Activated naive CD4-positive, alpha-beta T cell treated with anti-CD3 and anti-CD28 coated beads, Interleukin-2, amount 10 ng/mL, durations not matched to agents 7 days and 5 days (primary cell): ENCODE measurements at regions of chr3 and their contacts with region 1.

Region 1: GRCh38 chr3:14203521-14204079 is 25.0 kb downstream of the LSM3 start:
- DNase-seq: peak; percentile 61
- H3K4me3 Mint-ChIP-seq: no peak overlapping the region
- H3K27ac Mint-ChIP-seq: no peak overlapping the region
- H3K4me1 Mint-ChIP-seq: no peaks in the 10 kb centered on the region
- H3K27me3 Mint-ChIP-seq: no peaks in the 10 kb centered on the region

Region 2: GRCh38 chr3:14170531-14171173 is 32.9 kb before region 1 on chr3:
- CTCF ChIA-PET with region 1: no interaction called
- DNase-seq: no peak
- H3K4me3 Mint-ChIP-seq: no peak overlapping the region
- H3K27ac Mint-ChIP-seq: no peak overlapping the region
- H3K4me1 Mint-ChIP-seq: peaks cover 21% of the 10 kb centered on the region
- H3K27me3 Mint-ChIP-seq: no peaks in the 10 kb centered on the region

Region 3: DNA sequence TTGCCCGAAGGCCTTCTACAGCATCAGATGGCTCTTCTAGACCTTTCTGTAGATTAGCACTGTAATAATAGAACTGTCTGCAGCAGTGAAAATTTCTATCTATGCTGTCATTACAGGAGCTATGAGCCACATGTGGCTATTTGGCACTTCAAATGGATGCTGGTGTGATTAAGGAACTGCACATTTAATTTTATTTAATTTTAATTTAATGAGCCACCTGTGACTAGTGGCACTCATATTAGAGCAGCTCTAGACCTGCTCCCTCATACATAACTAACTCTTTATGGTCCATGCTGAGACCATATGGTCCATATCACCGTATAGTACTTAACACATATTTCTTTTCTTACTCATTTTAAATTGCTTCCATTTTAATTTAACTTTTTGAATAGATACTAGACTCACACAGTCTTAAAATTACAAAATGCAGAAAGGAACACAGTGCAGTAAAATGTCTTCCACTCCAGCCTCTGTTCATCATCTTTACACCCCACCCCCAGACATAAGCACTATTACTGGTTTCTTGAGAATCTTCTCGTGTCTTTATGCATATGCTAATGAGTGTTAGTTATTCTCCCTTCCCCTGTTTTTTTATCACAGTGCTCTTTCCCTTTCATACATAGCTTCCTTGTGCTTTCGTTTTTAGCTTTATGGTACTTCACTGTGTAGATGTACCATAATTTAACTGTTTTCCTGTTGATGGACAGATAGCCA is 15.4 kb before region 1 on chr3:
- CTCF ChIA-PET with region 1: interaction called, 11 read pairs
- DNase-seq: no peak
- H3K4me3 Mint-ChIP-seq: no peak overlapping the region
- H3K27ac Mint-ChIP-seq: no peak overlapping the region
- H3K4me1 Mint-ChIP-seq: peaks cover 18% of the 10 kb centered on the region
- H3K27me3 Mint-ChIP-seq: no peaks in the 10 kb centered on the region

Region 4: GRCh38 chr3:14231998-14232501 is 28.4 kb after region 1 on chr3:
- CTCF ChIA-PET with region 1: interaction called, 22 read pairs
- DNase-seq: no peak
- H3K4me3 Mint-ChIP-seq: no peak overlapping the region
- H3K27ac Mint-ChIP-seq: no peak overlapping the region
- H3K4me1 Mint-ChIP-seq: peaks cover 8% of the 10 kb centered on the region
- H3K27me3 Mint-ChIP-seq: peaks cover 37% of the 10 kb centered on the region

Region 5: DNA sequence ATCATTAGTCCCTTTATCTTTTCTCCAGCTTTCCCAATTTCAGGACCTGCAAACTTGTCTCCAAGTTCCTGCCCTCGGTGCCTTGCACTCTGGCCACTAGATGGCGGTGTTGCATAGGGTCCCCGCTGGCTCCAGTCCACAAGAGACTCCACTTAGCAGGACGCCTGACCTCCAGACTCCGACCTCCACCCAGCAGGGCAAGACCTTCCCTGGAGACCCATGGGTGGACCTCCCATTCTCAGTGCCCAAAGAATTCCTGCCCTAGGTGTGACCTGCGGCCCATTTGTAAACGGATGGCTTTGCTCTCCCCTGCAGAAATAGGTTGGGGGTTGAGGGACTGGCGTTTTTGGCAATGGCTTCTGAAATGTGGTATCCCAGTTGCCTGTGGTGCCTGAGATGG is 57.6 kb after region 1 on chr3:
- CTCF ChIA-PET with region 1: interaction called, 12 read pairs
- DNase-seq: peak; percentile 82
- H3K4me3 Mint-ChIP-seq: no peak overlapping the region
- H3K27ac Mint-ChIP-seq: no peak overlapping the region
- H3K4me1 Mint-ChIP-seq: no peaks in the 10 kb centered on the region
- H3K27me3 Mint-ChIP-seq: peaks cover 39% of the 10 kb centered on the region

Region 6: DNA sequence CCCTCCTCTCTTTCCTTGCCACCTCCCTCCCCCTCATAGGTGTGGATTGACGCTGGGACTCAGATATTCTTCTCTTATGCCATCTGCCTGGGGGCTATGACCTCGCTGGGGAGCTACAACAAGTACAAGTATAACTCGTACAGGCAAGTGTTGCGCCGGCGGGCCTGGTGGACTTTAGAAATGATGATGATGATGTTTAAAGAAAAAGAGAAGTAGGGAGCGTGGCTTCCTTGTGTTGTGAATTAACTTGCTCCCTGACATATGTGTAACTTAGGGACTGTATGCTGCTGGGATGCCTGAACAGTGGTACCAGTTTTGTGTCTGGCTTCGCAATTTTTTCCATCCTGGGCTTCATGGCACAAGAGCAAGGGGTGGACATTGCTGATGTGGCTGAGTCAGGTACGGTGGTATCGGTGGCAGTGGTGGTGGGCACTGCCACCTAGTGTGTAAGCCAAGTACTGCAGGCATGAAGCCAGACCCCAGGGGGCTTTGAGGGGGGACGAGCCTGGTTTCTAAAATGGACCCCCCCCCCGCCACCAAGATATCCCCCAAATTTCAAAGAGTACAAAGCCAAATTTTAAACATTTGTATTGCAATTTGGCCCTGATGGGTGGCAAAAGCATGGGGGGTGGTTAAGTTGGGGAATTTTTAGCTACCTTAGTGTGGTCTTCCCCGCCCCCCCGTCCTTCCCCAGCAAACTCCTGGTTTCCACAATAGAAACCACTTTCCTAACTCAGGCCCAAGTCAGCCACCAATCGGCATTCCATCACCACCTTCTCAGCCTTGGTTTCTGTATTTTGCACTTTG is 264.4 kb after region 1 on chr3:
- CTCF ChIA-PET with region 1: interaction called, 34 read pairs
- DNase-seq: peak; percentile 53
- H3K4me3 Mint-ChIP-seq: no peak overlapping the region
- H3K27ac Mint-ChIP-seq: no peak overlapping the region
- H3K4me1 Mint-ChIP-seq: peaks cover 2% of the 10 kb centered on the region
- H3K27me3 Mint-ChIP-seq: no peaks in the 10 kb centered on the region